CD8-positive, alpha-beta T cell (primary cell): ENCODE measurements at regions of chr5 and their contacts with region 1.

Region 1: GRCh38 chr5:97666773-97667172 is 483.7 kb upstream of the RIOK2 start:
- DNase-seq: no peak
- ATAC-seq: no peak
- H3K4me3 ChIP-seq: no peak overlapping the region
- H3K4me3 Mint-ChIP-seq: no peak overlapping the region
- H3K27ac ChIP-seq: no peak overlapping the region
- H3K27ac Mint-ChIP-seq: no peak overlapping the region
- H3K4me1 ChIP-seq: no peaks in the 10 kb centered on the region
- H3K4me1 Mint-ChIP-seq: no peaks in the 10 kb centered on the region
- H3K27me3 ChIP-seq: no peaks in the 10 kb centered on the region
- H3K27me3 Mint-ChIP-seq: no peaks in the 10 kb centered on the region
- CTCF ChIP-seq: no peak

Region 2: DNA sequence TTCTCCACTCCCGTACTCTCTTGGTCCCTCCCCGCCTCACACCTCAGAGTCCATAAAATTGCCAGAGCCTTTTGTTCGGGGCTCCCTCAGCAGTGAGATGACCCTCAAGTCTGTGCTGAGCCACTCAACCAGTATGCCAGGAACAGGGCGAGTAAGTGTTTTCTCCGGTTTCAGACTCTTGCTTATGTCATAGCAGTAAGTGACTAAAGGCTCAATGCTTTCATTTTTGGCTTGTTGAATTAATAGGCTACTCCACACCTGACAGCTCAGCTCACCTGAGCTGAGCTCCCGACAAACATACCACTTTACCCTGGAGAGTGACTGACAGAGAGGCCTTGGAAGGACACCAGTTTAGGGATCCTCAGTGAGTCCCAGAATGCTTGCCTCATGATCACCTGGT is 1264.3 kb before region 1 on chr5:
- CTCF ChIA-PET with region 1: no interaction called
- POLR2A ChIA-PET with region 1: no interaction called
- intact Hi-C with region 1: no loop called
- DNase-seq: no peak
- ATAC-seq: no peak
- H3K4me3 ChIP-seq: no peak overlapping the region
- H3K4me3 Mint-ChIP-seq: no peak overlapping the region
- H3K27ac ChIP-seq: no peak overlapping the region
- H3K27ac Mint-ChIP-seq: no peak overlapping the region
- H3K4me1 ChIP-seq: no peaks in the 10 kb centered on the region
- H3K4me1 Mint-ChIP-seq: no peaks in the 10 kb centered on the region
- H3K27me3 ChIP-seq: no peaks in the 10 kb centered on the region
- H3K27me3 Mint-ChIP-seq: no peaks in the 10 kb centered on the region
- CTCF ChIP-seq: no peak

Region 3: GRCh38 chr5:97636766-97637165 is 30.0 kb before region 1 on chr5:
- CTCF ChIA-PET with region 1: no interaction called
- POLR2A ChIA-PET with region 1: no interaction called
- intact Hi-C with region 1: loop called in 1 of 2 experiments (anchors 2 kb)
- DNase-seq: no peak
- ATAC-seq: no peak
- H3K4me3 ChIP-seq: no peak overlapping the region
- H3K4me3 Mint-ChIP-seq: no peak overlapping the region
- H3K27ac ChIP-seq: no peak overlapping the region
- H3K27ac Mint-ChIP-seq: no peak overlapping the region
- H3K4me1 ChIP-seq: no peaks in the 10 kb centered on the region
- H3K4me1 Mint-ChIP-seq: no peaks in the 10 kb centered on the region
- H3K27me3 ChIP-seq: no peaks in the 10 kb centered on the region
- H3K27me3 Mint-ChIP-seq: no peaks in the 10 kb centered on the region
- CTCF ChIP-seq: no peak

Region 4: DNA sequence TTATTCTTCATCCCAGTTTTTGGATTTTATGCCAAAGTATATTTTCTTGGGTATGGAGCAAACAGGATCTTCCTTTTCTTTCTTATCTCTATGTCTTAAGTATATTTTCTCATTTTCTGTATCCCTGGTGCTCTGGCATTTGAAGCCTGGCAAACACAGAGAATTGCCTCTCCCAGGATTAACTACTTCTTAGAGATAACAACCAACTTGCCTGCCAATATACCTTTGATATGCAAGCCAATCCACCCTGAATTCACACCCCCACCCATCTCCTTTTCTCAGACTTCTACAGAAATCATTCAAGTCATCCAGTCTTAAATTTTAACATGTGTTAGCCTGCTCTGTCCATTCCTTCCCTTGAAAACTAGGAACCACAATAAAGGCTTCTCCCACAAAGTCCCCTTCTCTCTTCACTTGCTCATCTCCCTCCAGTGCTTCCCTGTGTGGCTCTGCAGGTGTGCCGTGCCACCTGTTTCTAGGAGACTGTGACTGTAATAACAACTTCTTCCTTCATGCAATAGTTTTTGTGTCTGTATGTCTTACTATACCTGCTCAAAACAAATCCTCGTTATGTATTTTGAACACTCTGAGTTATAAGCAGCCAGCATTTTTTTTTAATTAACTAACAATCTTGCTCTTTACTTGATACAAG is 166.0 kb after region 1 on chr5:
- CTCF ChIA-PET with region 1: no interaction called
- POLR2A ChIA-PET with region 1: no interaction called
- intact Hi-C with region 1: no loop called
- DNase-seq: no peak
- ATAC-seq: no peak
- H3K4me3 ChIP-seq: no peak overlapping the region
- H3K4me3 Mint-ChIP-seq: no peak overlapping the region
- H3K27ac ChIP-seq: no peak overlapping the region
- H3K27ac Mint-ChIP-seq: no peak overlapping the region
- H3K4me1 ChIP-seq: no peaks in the 10 kb centered on the region
- H3K4me1 Mint-ChIP-seq: no peaks in the 10 kb centered on the region
- H3K27me3 ChIP-seq: no peaks in the 10 kb centered on the region
- H3K27me3 Mint-ChIP-seq: no peaks in the 10 kb centered on the region
- CTCF ChIP-seq: no peak

Region 5: DNA sequence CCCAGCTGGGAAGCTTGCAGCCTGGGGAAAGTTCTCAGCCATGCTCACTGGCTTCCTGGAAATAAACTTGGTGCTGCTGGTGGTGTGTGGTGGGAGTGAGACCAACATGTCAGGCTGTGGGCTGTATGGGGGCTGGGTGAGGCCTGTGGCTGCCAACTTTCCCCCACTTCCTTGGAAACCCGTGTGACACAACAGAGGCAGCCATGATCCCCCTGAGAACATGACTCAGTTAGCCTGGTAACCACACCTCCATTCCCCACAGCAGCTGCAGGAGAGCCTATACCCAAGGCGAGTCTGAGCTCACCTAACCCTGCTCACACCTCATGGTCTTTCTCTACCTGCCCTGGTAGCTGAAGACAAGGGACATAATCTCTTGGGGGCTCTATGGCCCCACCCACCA is 1034.0 kb after region 1 on chr5:
- CTCF ChIA-PET with region 1: no interaction called
- POLR2A ChIA-PET with region 1: no interaction called
- intact Hi-C with region 1: no loop called
- DNase-seq: no peak
- ATAC-seq: no peak
- H3K4me3 ChIP-seq: no peak overlapping the region
- H3K4me3 Mint-ChIP-seq: no peak overlapping the region
- H3K27ac ChIP-seq: no peak overlapping the region
- H3K27ac Mint-ChIP-seq: no peak overlapping the region
- H3K4me1 ChIP-seq: no peaks in the 10 kb centered on the region
- H3K4me1 Mint-ChIP-seq: no peaks in the 10 kb centered on the region
- H3K27me3 ChIP-seq: peaks cover 0 to 2% of the 10 kb centered on the region in 2 experiments
- H3K27me3 Mint-ChIP-seq: peaks cover 8% of the 10 kb centered on the region
- CTCF ChIP-seq: no peak